Endothelial cell of umbilical vein (primary cell): ENCODE measurements at regions of chr5 and their contacts with region 1.

Region 1: DNA sequence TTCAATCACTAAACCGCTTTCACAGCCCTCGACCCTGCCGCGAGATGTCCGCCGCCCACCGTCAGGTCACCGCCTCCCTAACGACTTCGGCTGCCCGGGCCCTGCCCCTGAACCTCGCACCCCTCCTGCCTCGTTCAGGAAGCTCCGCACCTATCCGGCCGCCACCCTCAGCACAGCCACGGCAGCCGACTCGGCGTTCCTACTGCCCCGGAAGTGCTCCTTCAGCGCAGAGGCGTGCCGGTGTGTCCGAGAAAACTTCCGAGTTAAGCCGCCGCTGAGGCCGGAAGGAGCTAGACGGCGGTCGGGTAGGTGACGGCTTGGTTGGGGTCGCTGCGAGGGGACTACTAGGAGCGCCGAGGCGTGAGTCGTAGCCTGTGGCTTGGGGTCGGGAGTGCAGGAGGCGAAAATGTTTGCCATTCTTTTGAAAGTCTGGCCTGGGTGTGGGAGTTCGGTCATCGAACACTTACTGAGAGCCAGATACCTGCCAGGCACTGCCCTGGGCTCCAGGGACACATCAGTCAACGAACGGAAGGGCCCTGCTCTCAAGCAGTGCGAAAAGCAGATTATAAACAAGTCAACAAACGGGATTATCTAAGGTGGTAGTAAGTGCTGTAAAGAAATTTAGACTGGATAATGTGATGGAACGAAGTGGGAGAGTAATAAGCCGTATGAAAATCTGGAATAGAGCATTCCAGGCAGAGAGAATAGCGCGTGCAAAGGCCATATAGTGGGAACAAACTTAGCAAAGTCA is at the starts of genes FAM114A2 and MFAP3:
- DNase-seq: peak; percentile 88
- H3K4me3 ChIP-seq: peak within 1 kb of the TSS; percentile 55 to 87 (median 79)
- H3K27ac ChIP-seq: peak within 1 kb of the TSS; percentile 52
- H3K4me1 ChIP-seq: peaks cover 28% of the 10 kb centered on the region
- H3K27me3 ChIP-seq: no peaks in the 10 kb centered on the region
- CTCF ChIP-seq: no peak
- POLR2A ChIP-seq: peak; percentile 71
- total RNA-seq, gene FAM114A2: 26.6 and 31.3 TPM in 2 replicates
- total RNA-seq, gene MFAP3: 31.7 and 35.3 TPM in 2 replicates

Region 2: DNA sequence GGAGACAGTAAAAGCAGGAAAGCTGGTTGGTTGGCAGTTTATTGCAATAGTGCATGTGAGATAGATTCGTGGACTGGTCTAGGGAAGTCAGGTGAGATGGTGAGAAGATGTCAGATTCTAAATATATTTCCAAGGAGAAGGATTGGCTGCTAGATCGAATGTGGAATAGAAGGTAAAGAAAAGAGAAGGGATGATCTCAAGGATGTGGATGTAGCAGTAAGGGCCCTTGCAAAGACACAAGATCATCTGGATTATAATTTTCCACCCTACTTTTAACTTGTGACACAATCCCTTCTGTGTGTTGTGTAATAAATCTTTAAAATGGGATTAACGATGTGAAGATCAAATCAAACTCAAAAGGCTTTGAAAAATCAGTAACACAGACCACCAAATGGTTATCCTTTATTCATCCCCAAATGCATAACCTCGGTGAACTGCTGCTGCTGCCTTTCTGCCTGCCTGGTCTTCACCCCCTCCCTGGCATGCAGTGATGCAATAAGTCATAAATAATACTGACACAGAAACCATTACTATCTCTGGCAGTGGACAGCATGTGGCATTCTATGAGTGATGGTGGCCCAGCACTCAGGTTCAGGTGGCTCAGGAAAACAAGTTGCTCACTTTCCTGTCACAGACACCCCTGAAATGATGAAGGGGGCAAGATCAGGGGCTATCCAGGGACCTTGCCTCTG is 178.5 kb before region 1 on chr5:
- CTCF ChIA-PET with region 1: no interaction called
- POLR2A ChIA-PET with region 1: no interaction called
- dilution Hi-C with region 1: no loop called
- intact Hi-C with region 1: no loop called
- DNase-seq: no peak
- H3K4me3 ChIP-seq: no peak overlapping the region
- H3K27ac ChIP-seq: no peak overlapping the region
- H3K4me1 ChIP-seq: no peaks in the 10 kb centered on the region
- H3K27me3 ChIP-seq: no peaks in the 10 kb centered on the region
- CTCF ChIP-seq: no peak
- POLR2A ChIP-seq: no peak

Region 3: GRCh38 chr5:154002093-154002492 is 36.8 kb before region 1 on chr5:
- CTCF ChIA-PET with region 1: interaction called, 3 read pairs
- POLR2A ChIA-PET with region 1: interaction called, 5 read pairs
- dilution Hi-C with region 1: no loop called
- intact Hi-C with region 1: loop called (anchors 1 kb)
- DNase-seq: peak; percentile 87
- H3K4me3 ChIP-seq: no peak overlapping the region
- H3K27ac ChIP-seq: peak overlapping the region; percentile 86
- H3K4me1 ChIP-seq: peaks cover 17% of the 10 kb centered on the region
- H3K27me3 ChIP-seq: no peaks in the 10 kb centered on the region
- CTCF ChIP-seq: no peak
- POLR2A ChIP-seq: no peak

Region 4: DNA sequence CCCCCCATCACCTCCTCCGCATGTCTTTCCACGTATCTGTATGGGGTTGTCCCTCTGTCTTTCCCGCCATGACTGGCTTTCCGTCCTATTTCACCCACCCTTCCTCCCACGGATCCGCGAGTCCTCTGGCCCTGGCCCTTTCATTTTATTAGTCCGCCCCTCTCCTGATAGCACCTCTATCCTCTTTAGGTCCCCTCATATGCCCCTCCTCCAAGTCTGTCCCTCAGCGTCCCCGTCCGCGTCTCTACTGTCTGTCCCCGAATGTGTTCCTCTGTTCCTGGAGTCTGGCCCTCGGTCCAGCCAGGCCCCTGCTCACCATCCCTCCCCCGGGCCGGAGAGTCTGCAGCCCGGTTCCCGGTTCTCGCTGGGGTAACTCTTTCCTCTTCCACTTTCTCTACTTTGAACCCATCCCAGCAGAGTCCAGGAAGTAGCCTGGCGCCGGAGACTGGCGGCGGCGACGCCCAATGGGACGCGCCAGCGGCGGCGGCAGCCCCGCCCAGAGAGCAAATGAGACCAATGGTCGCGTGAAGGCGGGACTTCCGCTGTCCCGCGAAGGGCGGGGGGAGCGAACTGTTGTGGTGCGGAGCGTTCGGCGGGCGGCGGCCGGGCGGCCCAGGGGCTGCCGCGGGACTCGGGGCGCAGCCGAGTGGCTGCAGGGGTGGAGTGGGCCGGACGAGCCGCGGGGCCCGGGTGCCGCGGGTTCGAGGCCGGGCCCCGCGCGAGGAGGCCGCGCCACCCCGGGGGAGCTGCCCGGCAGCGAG is 406.7 kb after region 1 on chr5 and contains the start of gene SAP30L:
- CTCF ChIA-PET with region 1: no interaction called
- POLR2A ChIA-PET with region 1: no interaction called
- dilution Hi-C with region 1: no loop called
- intact Hi-C with region 1: loop called (anchors 1 kb)
- DNase-seq: peak; percentile 97
- H3K4me3 ChIP-seq: peak within 1 kb of the TSS; percentile 82 to 98 (median 93)
- H3K27ac ChIP-seq: peak within 1 kb of the TSS; percentile 24
- H3K4me1 ChIP-seq: peaks cover 16% of the 10 kb centered on the region
- H3K27me3 ChIP-seq: no peaks in the 10 kb centered on the region
- CTCF ChIP-seq: no peak
- POLR2A ChIP-seq: peak; percentile 50
- total RNA-seq, gene SAP30L: 37.6 and 37.8 TPM in 2 replicates